ENCODE measurements at regions of chr19 and their contacts with region 1.

Region 1: DNA sequence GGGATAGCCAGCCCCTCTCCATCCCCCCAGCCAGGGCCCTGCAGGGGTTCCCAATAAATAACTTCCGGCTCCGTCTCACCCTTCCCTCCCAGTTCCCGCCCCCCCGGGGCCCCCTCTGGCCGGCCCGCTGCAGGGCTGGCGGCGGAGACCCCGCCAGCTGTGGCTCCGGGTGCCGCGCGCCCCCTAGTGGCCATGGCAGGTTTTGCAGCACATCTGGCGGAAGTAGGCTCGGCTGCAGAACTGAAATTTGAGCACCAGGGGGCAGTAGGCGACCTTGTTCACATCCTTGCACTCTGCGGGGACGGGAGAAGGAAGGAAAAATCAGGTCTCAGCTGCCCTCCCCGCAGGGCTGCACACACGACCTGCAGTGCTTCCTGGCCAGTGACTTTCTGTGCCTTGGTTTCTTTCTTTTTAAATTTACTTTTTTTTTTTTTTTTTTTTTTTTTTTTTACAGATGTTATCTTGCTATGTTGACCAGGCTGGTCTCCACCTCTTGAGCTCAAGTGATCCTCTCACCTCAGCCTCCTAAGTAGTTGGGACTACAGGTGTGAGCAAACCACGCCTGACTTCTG is 3.6 kb upstream of the MYO1F start:
- DNase-seq: peak; percentile 90
- H3K4me3 ChIP-seq: peak overlapping the region in 1 of 2 experiments; percentile 50; a peak in 1 of 4 replicates
- H3K27ac ChIP-seq: no peak overlapping the region
- H3K4me1 ChIP-seq: no peaks in the 10 kb centered on the region; a peak in 1 of 4 replicates
- H3K27me3 ChIP-seq: no peaks in the 10 kb centered on the region
- CTCF ChIP-seq: peak; percentile 99
- EP300 ChIP-seq: no peak
- RAD21 ChIP-seq: peak; percentile 78

Region 2: DNA sequence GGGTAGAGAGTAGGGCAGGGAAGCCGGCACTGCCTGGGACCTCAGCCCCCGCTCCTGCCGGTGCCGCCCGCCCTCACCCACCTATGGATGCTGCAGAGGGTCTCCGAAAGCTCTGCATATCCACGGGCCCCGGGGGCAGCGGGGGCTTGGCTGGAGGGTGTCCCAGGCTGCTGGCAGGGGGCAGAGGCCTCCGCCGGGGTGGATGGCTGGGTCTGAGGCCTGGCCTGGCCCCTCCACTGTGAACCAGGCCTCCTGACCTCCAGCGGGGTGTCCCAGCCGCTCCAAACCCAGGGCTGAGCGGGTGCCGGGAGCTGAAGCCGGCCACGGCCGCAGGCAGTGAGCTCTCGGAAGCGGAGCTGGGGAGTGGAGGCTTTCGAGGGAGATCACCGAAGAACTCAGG is 82.5 kb before region 1 on chr19:
- CTCF ChIA-PET with region 1: no interaction called
- POLR2A ChIA-PET with region 1: no interaction called
- DNase-seq: no peak
- H3K4me3 ChIP-seq: no peak overlapping the region
- H3K27ac ChIP-seq: no peak overlapping the region
- H3K4me1 ChIP-seq: no peaks in the 10 kb centered on the region
- H3K27me3 ChIP-seq: no peaks in the 10 kb centered on the region
- CTCF ChIP-seq: no peak
- EP300 ChIP-seq: no peak
- RAD21 ChIP-seq: no peak

Region 3: GRCh38 chr19:8552810-8553209 is 28.0 kb before region 1 on chr19:
- CTCF ChIA-PET with region 1: interaction called, 44 read pairs
- POLR2A ChIA-PET with region 1: no interaction called
- DNase-seq: peak; percentile 79
- H3K4me3 ChIP-seq: no peak overlapping the region
- H3K27ac ChIP-seq: no peak overlapping the region
- H3K4me1 ChIP-seq: no peaks in the 10 kb centered on the region
- H3K27me3 ChIP-seq: no peaks in the 10 kb centered on the region
- CTCF ChIP-seq: no peak
- EP300 ChIP-seq: no peak
- RAD21 ChIP-seq: no peak

Region 4: GRCh38 chr19:8592231-8593009 is 11.6 kb after region 1 on chr19:
- CTCF ChIA-PET with region 1: interaction called, 152 read pairs
- POLR2A ChIA-PET with region 1: no interaction called
- DNase-seq: peak; percentile 98
- H3K4me3 ChIP-seq: peak overlapping the region; percentile 44 to 60
- H3K27ac ChIP-seq: peak overlapping the region in 1 of 2 experiments; percentile 48; a peak in 1 of 4 replicates
- H3K4me1 ChIP-seq: peaks cover 0 to 9% of the 10 kb centered on the region in 2 experiments; a peak in 1 of 4 replicates
- H3K27me3 ChIP-seq: no peaks in the 10 kb centered on the region
- CTCF ChIP-seq: no peak
- EP300 ChIP-seq: no peak
- RAD21 ChIP-seq: no peak

Region 5: GRCh38 chr19:8615813-8616596 is 35.2 kb after region 1 on chr19:
- CTCF ChIA-PET with region 1: interaction called, 112 read pairs
- POLR2A ChIA-PET with region 1: interaction called, 3 read pairs
- DNase-seq: peak; percentile 68
- H3K4me3 ChIP-seq: no peak overlapping the region; a peak in 1 of 4 replicates
- H3K27ac ChIP-seq: no peak overlapping the region
- H3K4me1 ChIP-seq: no peaks in the 10 kb centered on the region; a peak in 2 of 4 replicates
- H3K27me3 ChIP-seq: peaks cover 47% of the 10 kb centered on the region; the same call in 1 of the 2 replicates
- CTCF ChIP-seq: peak; percentile 97
- EP300 ChIP-seq: no peak
- RAD21 ChIP-seq: peak; percentile 64

Measured in SK-N-SH (cell line).